GM13977 (cell line): ENCODE measurements at regions of chr5 and their contacts with region 1.

Region 1: GRCh38 chr5:147188200-147189108 is 46.4 kb upstream of the STK32A start:
- DNase-seq: peak; percentile 43
- CTCF ChIP-seq: peak; percentile 69

Region 2: GRCh38 chr5:146533260-146533857 is 655.1 kb before region 1 on chr5:
- in situ Hi-C with region 1: loop called (anchors 25 kb)
- DNase-seq: peak; percentile 73
- CTCF ChIP-seq: peak; percentile 93